ENCODE measurements at regions of chr17 and their contacts with region 1.

Region 1: GRCh38 chr17:35119368-35120165 is at the start of gene RAD51D:
- DNase-seq: peak; percentile 58 to 80 (median 70)
- H3K4me3 ChIP-seq: peak within 1 kb of the TSS; percentile 12 to 83 (median 78)
- H3K27ac ChIP-seq: peak within 1 kb of the TSS in 3 of 5 donors; percentile 38 to 67 (median 43)
- H3K4me1 ChIP-seq: peaks cover 7 to 12% of the 10 kb centered on the region in 2 donors
- H3K27me3 ChIP-seq: no peaks in the 10 kb centered on the region
- CTCF ChIP-seq: peak; percentile 48 to 98 (median 82)
- POLR2A ChIP-seq: peak; percentile 19 to 25
- total RNA-seq, gene RAD51D: 3.3 to 14.3 (median 8.7) TPM

Region 2: GRCh38 chr17:34412965-34413441 is 706.6 kb before region 1 on chr17:
- intact Hi-C with region 1: loop called in 1 of 2 experiments (anchors 5 kb)
- DNase-seq: no peak
- H3K4me3 ChIP-seq: no peak overlapping the region
- H3K27ac ChIP-seq: no peak overlapping the region
- H3K4me1 ChIP-seq: no peaks in the 10 kb centered on the region
- H3K27me3 ChIP-seq: peaks cover 8% of the 10 kb centered on the region
- CTCF ChIP-seq: no peak
- POLR2A ChIP-seq: no peak

Region 3: DNA sequence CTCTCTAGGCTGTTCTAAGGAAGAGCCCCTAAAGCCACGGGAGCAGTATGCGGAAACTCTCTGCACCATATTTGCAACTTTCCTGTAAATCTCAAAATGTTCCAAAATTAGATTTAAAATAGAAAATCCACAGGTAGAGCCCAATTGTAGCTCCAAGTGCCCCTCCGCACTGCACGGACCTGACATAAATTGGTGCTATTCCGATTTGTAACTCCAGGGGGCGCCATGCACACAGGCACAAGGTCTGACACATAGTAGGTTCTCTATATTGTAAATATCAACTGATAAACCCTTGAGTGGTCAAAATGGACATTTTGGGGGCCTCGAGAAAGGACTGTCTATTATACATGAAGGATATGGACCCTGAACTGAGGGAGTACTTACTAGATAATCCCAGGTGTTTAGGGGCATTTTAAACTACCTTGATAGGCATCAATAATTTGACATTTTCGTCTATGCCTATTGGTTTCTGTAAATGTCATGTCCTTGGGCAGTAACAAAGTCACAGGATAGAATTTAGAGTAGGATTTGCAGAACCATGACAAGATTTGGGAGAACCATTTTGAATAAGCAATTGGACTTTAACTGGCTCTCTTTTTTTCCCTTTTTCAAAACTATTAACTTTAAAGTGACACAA is 576.7 kb before region 1 on chr17:
- intact Hi-C with region 1: loop called (anchors 10 kb)
- DNase-seq: peak in 4 of 7 donors; percentile 38 to 54 (median 43)
- H3K4me3 ChIP-seq: no peak overlapping the region
- H3K27ac ChIP-seq: no peak overlapping the region
- H3K4me1 ChIP-seq: no peaks in the 10 kb centered on the region
- H3K27me3 ChIP-seq: peaks cover 11% of the 10 kb centered on the region
- CTCF ChIP-seq: peak; percentile 51 to 82 (median 72)
- POLR2A ChIP-seq: no peak

Region 4: DNA sequence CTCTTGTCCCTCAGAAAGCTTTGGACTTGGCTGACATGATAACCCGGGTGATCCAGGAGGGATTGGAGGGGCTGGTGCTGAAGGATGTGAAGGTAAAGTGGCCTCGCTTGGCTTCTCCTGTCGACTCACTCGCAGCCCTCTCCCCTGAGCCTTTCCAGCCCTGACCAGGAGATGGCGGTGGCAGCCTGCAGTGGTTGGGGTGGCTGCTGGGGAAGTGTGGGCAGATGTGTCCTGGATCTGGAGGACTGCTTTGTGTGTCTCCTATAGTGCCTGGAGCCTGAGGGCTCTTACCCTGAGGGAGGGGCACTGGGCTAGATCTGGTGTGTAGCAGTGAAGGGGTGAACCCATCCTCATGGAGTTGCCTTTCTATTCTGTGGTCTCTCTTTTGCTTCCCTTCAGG is 121.4 kb before region 1 on chr17:
- intact Hi-C with region 1: loop called (anchors 5 kb)
- DNase-seq: peak; percentile 60 to 82 (median 73)
- H3K4me3 ChIP-seq: no peak overlapping the region
- H3K27ac ChIP-seq: peak overlapping the region in 3 of 5 donors; percentile 22 to 87 (median 61)
- H3K4me1 ChIP-seq: peaks cover 0 to 13% of the 10 kb centered on the region in 2 donors
- H3K27me3 ChIP-seq: no peaks in the 10 kb centered on the region
- CTCF ChIP-seq: peak; percentile 52 to 91 (median 74)
- POLR2A ChIP-seq: no peak